HepG2 (cell line): ENCODE measurements at regions of chr2 and their contacts with region 1.

Region 1: GRCh38 chr2:169716238-169716886 is 17.3 kb upstream of the KLHL23 start:
- DNase-seq: no peak
- ATAC-seq: peak; percentile 71
- H3K4me3 ChIP-seq: peak overlapping the region; percentile 50 to 70 (median 51)
- H3K27ac ChIP-seq: peak overlapping the region; percentile 6
- H3K4me1 ChIP-seq: peaks cover 80% of the 10 kb centered on the region
- H3K27me3 ChIP-seq: no peaks in the 10 kb centered on the region
- CTCF ChIP-seq: no peak
- EP300 ChIP-seq: no peak
- POLR2A ChIP-seq: no peak; a peak in 1 of 4 replicates
- RAD21 ChIP-seq: no peak

Region 2: GRCh38 chr2:169599568-169599967 is 116.8 kb before region 1 on chr2:
- CTCF ChIA-PET with region 1: no interaction called
- POLR2A ChIA-PET with region 1: no interaction called
- in situ Hi-C with region 1: no loop called
- intact Hi-C with region 1: no loop called
- DNase-seq: no peak
- ATAC-seq: no peak
- H3K4me3 ChIP-seq: no peak overlapping the region
- H3K27ac ChIP-seq: no peak overlapping the region
- H3K4me1 ChIP-seq: no peaks in the 10 kb centered on the region
- H3K27me3 ChIP-seq: no peaks in the 10 kb centered on the region
- CTCF ChIP-seq: no peak
- EP300 ChIP-seq: no peak
- POLR2A ChIP-seq: no peak
- RAD21 ChIP-seq: no peak

Region 3: GRCh38 chr2:169636440-169637097 is 79.8 kb before region 1 on chr2:
- CTCF ChIA-PET with region 1: no interaction called
- POLR2A ChIA-PET with region 1: no interaction called
- in situ Hi-C with region 1: no loop called
- intact Hi-C with region 1: no loop called
- DNase-seq: no peak
- ATAC-seq: no peak
- H3K4me3 ChIP-seq: no peak overlapping the region
- H3K27ac ChIP-seq: no peak overlapping the region
- H3K4me1 ChIP-seq: peaks cover 32% of the 10 kb centered on the region
- H3K27me3 ChIP-seq: no peaks in the 10 kb centered on the region
- CTCF ChIP-seq: no peak
- EP300 ChIP-seq: no peak
- POLR2A ChIP-seq: no peak
- RAD21 ChIP-seq: no peak

Region 4: DNA sequence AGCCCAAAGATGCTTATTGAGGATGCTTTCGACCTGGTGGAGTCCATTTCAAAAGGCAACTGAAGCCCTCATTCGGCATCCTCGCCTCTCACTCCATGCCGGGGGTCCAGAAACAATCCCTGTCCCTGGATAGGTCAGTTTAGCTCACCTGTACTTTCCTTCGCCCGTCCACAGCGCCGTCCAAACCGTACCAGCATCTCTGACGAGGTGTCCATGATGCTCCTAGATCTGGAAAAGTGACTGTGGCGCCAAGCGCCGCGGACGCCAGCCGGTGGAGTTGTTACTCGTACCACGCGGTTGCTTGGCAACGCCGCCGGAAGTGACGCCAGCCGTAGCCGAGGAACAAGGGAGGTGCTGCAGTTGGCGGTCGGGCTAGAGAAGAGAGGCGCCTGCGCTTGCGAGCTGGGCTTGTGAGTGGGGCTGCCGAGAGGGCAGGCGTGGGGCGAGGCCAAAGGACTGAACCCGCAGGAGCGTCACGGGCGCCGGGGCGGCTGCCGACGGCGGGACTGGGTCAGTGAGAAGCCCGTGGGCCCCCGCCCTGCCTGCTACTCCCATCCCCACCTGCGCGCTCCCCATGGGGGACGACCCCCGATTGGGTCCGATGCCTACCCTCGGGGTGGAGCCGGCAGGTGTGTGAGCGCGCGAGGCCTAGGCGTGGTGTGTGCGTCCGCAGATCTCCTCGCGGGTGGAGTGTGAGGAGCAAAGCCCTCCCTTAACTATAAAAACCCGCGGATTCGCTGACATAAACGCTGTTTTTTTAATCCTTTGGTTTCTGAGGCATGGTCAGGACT is 22.1 kb before region 1 on chr2 and contains the starts of genes CFAP210 and PHOSPHO2:
- CTCF ChIA-PET with region 1: no interaction called
- POLR2A ChIA-PET with region 1: interaction called, 19 read pairs
- in situ Hi-C with region 1: no loop called
- intact Hi-C with region 1: loop called (anchors 1 kb)
- DNase-seq: peak; percentile 96
- ATAC-seq: peak; percentile 99
- H3K4me3 ChIP-seq: peak within 1 kb of the TSS; percentile 78 to 88 (median 81)
- H3K27ac ChIP-seq: peak within 1 kb of the TSS; percentile 79
- H3K4me1 ChIP-seq: peaks cover 44% of the 10 kb centered on the region
- H3K27me3 ChIP-seq: no peaks in the 10 kb centered on the region; a peak in 1 of 5 replicates
- CTCF ChIP-seq: peak; percentile 46
- EP300 ChIP-seq: peak in 1 of 2 experiments; percentile 67; a peak in 1 of 4 replicates
- POLR2A ChIP-seq: peak; percentile 92 to 99
- RAD21 ChIP-seq: peak; percentile 69
- total RNA-seq, gene CFAP210: 0.14 and 0.18 TPM in 2 replicates
- total RNA-seq, gene PHOSPHO2: 11.4 and 14.6 TPM in 2 replicates

Region 5: GRCh38 chr2:169705927-169706326 is 10.4 kb before region 1 on chr2:
- CTCF ChIA-PET with region 1: no interaction called
- POLR2A ChIA-PET with region 1: interaction called, 20 read pairs
- in situ Hi-C with region 1: no loop called
- intact Hi-C with region 1: no loop called
- DNase-seq: no peak
- ATAC-seq: no peak
- H3K4me3 ChIP-seq: no peak overlapping the region
- H3K27ac ChIP-seq: no peak overlapping the region
- H3K4me1 ChIP-seq: no peaks in the 10 kb centered on the region
- H3K27me3 ChIP-seq: no peaks in the 10 kb centered on the region
- CTCF ChIP-seq: no peak
- EP300 ChIP-seq: no peak
- POLR2A ChIP-seq: no peak
- RAD21 ChIP-seq: no peak

Region 6: GRCh38 chr2:169729274-169729605 is 12.9 kb after region 1 on chr2:
- CTCF ChIA-PET with region 1: interaction called, 3 read pairs
- POLR2A ChIA-PET with region 1: interaction called, 41 read pairs
- in situ Hi-C with region 1: no loop called
- intact Hi-C with region 1: loop called (anchors 1 kb)
- DNase-seq: no peak
- ATAC-seq: no peak
- H3K4me3 ChIP-seq: no peak overlapping the region
- H3K27ac ChIP-seq: peak overlapping the region; percentile 38
- H3K4me1 ChIP-seq: peaks cover 43% of the 10 kb centered on the region
- H3K27me3 ChIP-seq: no peaks in the 10 kb centered on the region
- CTCF ChIP-seq: no peak
- EP300 ChIP-seq: no peak
- POLR2A ChIP-seq: no peak
- RAD21 ChIP-seq: no peak

Region 7: GRCh38 chr2:169734169-169734847 is 17.9 kb after region 1 on chr2:
- CTCF ChIA-PET with region 1: no interaction called
- POLR2A ChIA-PET with region 1: interaction called, 41 read pairs
- in situ Hi-C with region 1: no loop called
- intact Hi-C with region 1: loop called (anchors 1 kb)
- DNase-seq: no peak
- ATAC-seq: peak; percentile 27; the same call in 2 of the 3 replicates
- H3K4me3 ChIP-seq: peak overlapping the region; percentile 64 to 89 (median 87)
- H3K27ac ChIP-seq: peak overlapping the region; percentile 70
- H3K4me1 ChIP-seq: peaks cover 64% of the 10 kb centered on the region
- H3K27me3 ChIP-seq: no peaks in the 10 kb centered on the region; a peak in 1 of 5 replicates
- CTCF ChIP-seq: no peak
- EP300 ChIP-seq: no peak
- POLR2A ChIP-seq: no peak
- RAD21 ChIP-seq: no peak

Region 8: GRCh38 chr2:170815746-170816503 is 1099.6 kb after region 1 on chr2:
- CTCF ChIA-PET with region 1: no interaction called
- POLR2A ChIA-PET with region 1: no interaction called
- in situ Hi-C with region 1: no loop called
- intact Hi-C with region 1: no loop called
- DNase-seq: peak; percentile 68
- ATAC-seq: peak; percentile 82
- H3K4me3 ChIP-seq: peak overlapping the region; percentile 32 to 74 (median 45); a peak in 5 of 6 replicates
- H3K27ac ChIP-seq: no peak overlapping the region
- H3K4me1 ChIP-seq: peaks cover 27% of the 10 kb centered on the region
- H3K27me3 ChIP-seq: peaks cover 23 to 72% of the 10 kb centered on the region in 2 experiments
- CTCF ChIP-seq: peak; percentile 91
- EP300 ChIP-seq: no peak
- POLR2A ChIP-seq: no peak
- RAD21 ChIP-seq: peak; percentile 98